Tibial artery (tissue), 4 donors: ENCODE measurements at regions of chr17 and their contacts with region 1.

Region 1: GRCh38 chr17:45834471-45835396 is 9.9 kb upstream of the SPPL2C start:
- DNase-seq: no peak
- H3K4me3 ChIP-seq: no peak overlapping the region
- H3K27ac ChIP-seq: no peak overlapping the region
- H3K4me1 ChIP-seq: peaks cover 0 to 2% (median 0%) of the 10 kb centered on the region in 4 donors
- H3K27me3 ChIP-seq: peaks cover 0 to 79% of the 10 kb centered on the region in 2 donors
- CTCF ChIP-seq: no peak

Region 2: GRCh38 chr17:45218895-45219661 is 615.7 kb before region 1 on chr17:
- intact Hi-C with region 1: no loop called
- DNase-seq: peak; percentile 89 to 91
- H3K4me3 ChIP-seq: no peak overlapping the region
- H3K27ac ChIP-seq: no peak overlapping the region
- H3K4me1 ChIP-seq: peaks cover 0 to 19% (median 15%) of the 10 kb centered on the region in 4 donors
- H3K27me3 ChIP-seq: peaks cover 0 to 38% of the 10 kb centered on the region in 2 donors
- CTCF ChIP-seq: peak; percentile 91 to 98

Region 3: DNA sequence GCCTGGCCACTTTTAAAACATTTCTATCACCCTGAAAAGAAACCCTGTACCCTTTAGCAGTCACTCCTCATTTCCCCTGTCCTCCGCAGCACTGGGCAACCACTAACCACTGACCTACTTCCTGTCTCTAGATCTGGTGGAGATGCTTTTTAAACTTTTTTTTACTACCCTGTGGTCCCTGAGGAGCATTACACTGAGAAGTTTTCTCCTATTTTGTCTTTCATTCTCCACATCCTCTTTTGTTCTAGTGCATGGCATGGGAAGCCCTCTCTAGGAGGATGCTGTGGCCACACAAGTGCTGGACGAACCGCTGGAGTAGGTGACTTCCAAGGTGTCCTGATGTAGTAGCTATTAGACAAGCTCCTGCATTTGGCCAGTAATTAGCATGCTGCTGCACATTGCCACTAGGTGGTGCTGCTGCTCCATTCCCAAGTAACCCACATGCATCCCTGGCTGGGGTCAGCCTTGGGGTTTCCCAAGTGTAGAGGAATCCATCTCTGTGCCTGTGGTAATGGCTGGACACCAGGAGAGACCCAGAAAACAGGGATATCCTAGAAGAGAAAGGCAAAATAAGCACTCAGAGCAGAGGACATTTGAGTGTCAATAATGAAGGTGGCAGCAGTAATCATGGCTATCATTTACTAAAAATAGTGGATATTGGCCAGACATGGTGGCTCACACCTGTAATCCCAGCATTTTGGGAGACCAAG is 194.4 kb before region 1 on chr17:
- intact Hi-C with region 1: loop called (anchors 2 kb)
- DNase-seq: peak; percentile 60 to 73
- H3K4me3 ChIP-seq: no peak overlapping the region
- H3K27ac ChIP-seq: no peak overlapping the region
- H3K4me1 ChIP-seq: no peaks in the 10 kb centered on the region
- H3K27me3 ChIP-seq: peaks cover 0 to 9% of the 10 kb centered on the region in 2 donors
- CTCF ChIP-seq: peak; percentile 88 to 98